PC-9 (cell line): ENCODE measurements at regions of chr5 and their contacts with region 1.

Region 1: GRCh38 chr5:138386290-138386689 is 33.8 kb downstream of the KDM3B start:
- DNase-seq: no peak
- H3K4me3 ChIP-seq: no peak overlapping the region
- H3K27ac ChIP-seq: no peak overlapping the region
- H3K4me1 ChIP-seq: no peaks in the 10 kb centered on the region
- H3K27me3 ChIP-seq: no peaks in the 10 kb centered on the region
- CTCF ChIP-seq: no peak

Region 2: DNA sequence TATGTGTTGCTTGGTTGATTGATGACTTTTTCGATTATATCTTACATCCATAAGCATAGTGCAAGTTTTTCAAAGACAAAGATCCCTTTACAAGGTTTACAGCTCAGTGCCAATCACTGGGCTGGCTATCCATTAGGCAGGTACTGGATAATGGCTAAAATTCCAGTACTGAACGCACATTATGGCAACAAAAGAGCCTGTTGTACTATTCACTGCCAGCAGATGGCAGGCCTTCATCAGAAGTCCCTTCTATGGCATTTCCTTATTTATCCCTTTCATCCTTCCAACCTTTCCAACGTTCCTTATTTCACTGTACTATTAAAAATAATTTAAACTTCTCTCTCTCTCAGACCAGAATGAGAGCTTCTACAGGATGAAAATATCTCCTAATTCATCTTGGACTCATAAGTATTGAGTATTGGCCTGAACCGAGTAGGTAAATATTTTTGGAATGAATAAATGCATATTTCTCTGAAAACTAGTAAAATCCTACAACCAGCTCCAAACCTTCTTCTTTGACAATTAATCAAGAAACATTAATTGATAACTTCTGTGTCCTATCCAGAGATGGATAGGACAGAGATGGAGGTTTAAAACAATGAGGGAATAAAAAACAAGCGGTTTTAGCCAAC is 309.1 kb before region 1 on chr5:
- CTCF ChIA-PET with region 1: no interaction called
- POLR2A ChIA-PET with region 1: interaction called, 27 read pairs
- intact Hi-C with region 1: no loop called
- DNase-seq: peak in 1 of 2 experiments; percentile 56
- H3K4me3 ChIP-seq: no peak overlapping the region
- H3K27ac ChIP-seq: no peak overlapping the region
- H3K4me1 ChIP-seq: no peaks in the 10 kb centered on the region
- H3K27me3 ChIP-seq: no peaks in the 10 kb centered on the region
- CTCF ChIP-seq: peak; percentile 92

Region 3: GRCh38 chr5:138503487-138504270 is 117.4 kb after region 1 on chr5:
- CTCF ChIA-PET with region 1: no interaction called
- POLR2A ChIA-PET with region 1: no interaction called
- intact Hi-C with region 1: no loop called
- DNase-seq: peak; percentile 24 to 38
- H3K4me3 ChIP-seq: no peak overlapping the region
- H3K27ac ChIP-seq: no peak overlapping the region
- H3K4me1 ChIP-seq: no peaks in the 10 kb centered on the region
- H3K27me3 ChIP-seq: no peaks in the 10 kb centered on the region
- CTCF ChIP-seq: peak; percentile 84